Psoas muscle (tissue), 8 donors: ENCODE measurements at regions of chr7 and their contacts with region 1.

Region 1: DNA sequence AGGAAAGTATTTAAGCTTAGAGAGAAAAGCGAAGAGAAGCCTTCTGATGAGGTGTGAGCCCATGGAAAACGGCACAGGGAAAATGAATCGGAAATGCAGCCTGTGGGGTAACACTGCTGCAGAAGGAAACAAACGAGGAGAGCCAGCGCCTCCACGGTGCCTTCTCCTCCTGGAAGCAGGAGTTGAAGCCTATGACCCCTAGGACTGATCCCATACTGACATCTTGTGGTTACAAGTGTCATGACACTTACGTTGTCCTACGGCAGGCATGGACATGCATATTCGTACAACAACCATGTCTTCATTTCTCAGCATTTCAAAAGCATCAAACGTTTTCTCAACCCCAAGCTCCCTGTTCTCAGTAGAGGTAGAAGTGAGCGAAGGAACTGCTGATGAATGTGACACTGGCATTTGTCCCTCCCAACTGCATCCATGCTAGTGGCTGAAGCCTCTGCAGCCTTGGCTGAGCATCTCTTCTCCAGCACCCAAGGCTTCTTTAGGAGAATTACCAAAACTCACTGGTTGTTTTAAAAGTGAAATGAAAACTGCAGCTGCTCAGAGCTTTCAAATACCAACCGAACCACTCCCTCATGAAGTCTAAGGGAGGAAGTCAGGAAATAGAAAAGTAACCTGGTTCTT is 160.2 kb downstream of the JAZF1 start:
- DNase-seq: peak; percentile 55 to 77
- ATAC-seq: peak; percentile 85 to 94 (median 88)
- H3K4me3 ChIP-seq: no peak overlapping the region
- H3K27ac ChIP-seq: no peak overlapping the region
- H3K4me1 ChIP-seq: peaks cover 36% of the 10 kb centered on the region
- H3K27me3 ChIP-seq: no peaks in the 10 kb centered on the region
- CTCF ChIP-seq: peak; percentile 89

Region 2: GRCh38 chr7:27586825-27587224 is 433.6 kb before region 1 on chr7:
- intact Hi-C with region 1: loop called in 1 of 2 experiments (anchors 10 kb)
- DNase-seq: peak; percentile 53 to 80
- ATAC-seq: peak; percentile 97 to 100 (median 100)
- H3K4me3 ChIP-seq: no peak overlapping the region
- H3K27ac ChIP-seq: no peak overlapping the region
- H3K4me1 ChIP-seq: no peaks in the 10 kb centered on the region
- H3K27me3 ChIP-seq: no peaks in the 10 kb centered on the region
- CTCF ChIP-seq: peak; percentile 31

Region 3: GRCh38 chr7:27689591-27690164 is 330.7 kb before region 1 on chr7:
- intact Hi-C with region 1: loop called in 1 of 2 experiments (anchors 10 kb)
- DNase-seq: no peak
- ATAC-seq: peak in 3 of 4 donors; percentile 36 to 57 (median 54)
- H3K4me3 ChIP-seq: no peak overlapping the region
- H3K27ac ChIP-seq: no peak overlapping the region
- H3K4me1 ChIP-seq: no peaks in the 10 kb centered on the region
- H3K27me3 ChIP-seq: no peaks in the 10 kb centered on the region
- CTCF ChIP-seq: peak; percentile 19

Region 4: GRCh38 chr7:27921081-27921836 is 99.2 kb before region 1 on chr7:
- intact Hi-C with region 1: loop called in 1 of 2 experiments (anchors 5 kb)
- DNase-seq: no peak
- ATAC-seq: peak; percentile 52 to 87 (median 60)
- H3K4me3 ChIP-seq: peak overlapping the region; percentile 17
- H3K27ac ChIP-seq: no peak overlapping the region
- H3K4me1 ChIP-seq: no peaks in the 10 kb centered on the region
- H3K27me3 ChIP-seq: no peaks in the 10 kb centered on the region
- CTCF ChIP-seq: peak; percentile 60

Region 5: GRCh38 chr7:27936047-27936767 is 84.2 kb before region 1 on chr7:
- intact Hi-C with region 1: loop called in 1 of 2 experiments (anchors 5 kb)
- DNase-seq: no peak
- ATAC-seq: no peak
- H3K4me3 ChIP-seq: no peak overlapping the region
- H3K27ac ChIP-seq: no peak overlapping the region
- H3K4me1 ChIP-seq: peaks cover 19% of the 10 kb centered on the region
- H3K27me3 ChIP-seq: no peaks in the 10 kb centered on the region
- CTCF ChIP-seq: no peak

Region 6: GRCh38 chr7:28136885-28137284 is 116.5 kb after region 1 on chr7:
- intact Hi-C with region 1: no loop called
- DNase-seq: no peak
- ATAC-seq: peak in 2 of 4 donors; percentile 32 to 53
- H3K4me3 ChIP-seq: no peak overlapping the region
- H3K27ac ChIP-seq: no peak overlapping the region
- H3K4me1 ChIP-seq: peaks cover 31% of the 10 kb centered on the region
- H3K27me3 ChIP-seq: no peaks in the 10 kb centered on the region
- CTCF ChIP-seq: no peak

Region 7: DNA sequence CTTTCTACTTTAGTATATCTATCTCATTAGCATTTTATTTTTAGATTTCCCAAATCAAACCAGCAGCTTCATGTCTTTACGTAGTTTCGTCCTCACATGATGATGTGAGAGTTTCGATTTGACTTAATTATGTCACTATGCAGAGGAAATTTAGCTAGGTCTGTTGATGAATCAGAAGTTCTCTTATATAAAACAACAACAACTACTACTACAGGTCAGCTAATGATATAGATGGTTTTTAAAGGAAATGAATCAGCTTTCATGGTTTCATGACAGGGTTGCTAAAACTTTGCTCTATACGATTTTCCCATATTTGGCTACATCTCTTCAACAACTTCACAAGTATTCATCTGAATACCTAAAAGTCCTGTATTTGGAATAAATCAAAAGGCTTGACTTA is 131.5 kb after region 1 on chr7:
- intact Hi-C with region 1: no loop called
- DNase-seq: no peak
- ATAC-seq: no peak
- H3K4me3 ChIP-seq: no peak overlapping the region
- H3K27ac ChIP-seq: no peak overlapping the region
- H3K4me1 ChIP-seq: peaks cover 15% of the 10 kb centered on the region
- H3K27me3 ChIP-seq: no peaks in the 10 kb centered on the region
- CTCF ChIP-seq: no peak